Heart left ventricle (tissue), 16 donors: ENCODE measurements at regions of chr6 and their contacts with region 1.

Region 1: GRCh38 chr6:20401205-20402091 is at the start of gene E2F3:
- DNase-seq: peak; percentile 99 to 100 (median 100)
- ATAC-seq: peak; percentile 94 to 99 (median 96)
- H3K4me3 ChIP-seq: peak within 1 kb of the TSS; percentile 64 to 89 (median 78)
- H3K27ac ChIP-seq: peak within 1 kb of the TSS; percentile 64 to 95 (median 91)
- H3K4me1 ChIP-seq: peaks cover 0 to 37% (median 7%) of the 10 kb centered on the region in 12 donors
- H3K27me3 ChIP-seq: no peaks in the 10 kb centered on the region
- CTCF ChIP-seq: no peak
- POLR2A ChIP-seq: peak in 1 of 2 donors; percentile 34
- total RNA-seq, gene E2F3: 4.2 to 13.8 (median 6.8) TPM

Region 2: GRCh38 chr6:19804205-19805123 is 597.0 kb before region 1 on chr6:
- intact Hi-C with region 1: loop called in 2 of 10 experiments (anchors 10 kb)
- DNase-seq: peak; percentile 96 to 97 (median 97)
- ATAC-seq: peak; percentile 98 to 100 (median 99)
- H3K4me3 ChIP-seq: peak overlapping the region; percentile 12 to 67 (median 58)
- H3K27ac ChIP-seq: peak overlapping the region; percentile 82 to 99 (median 92)
- H3K4me1 ChIP-seq: peaks cover 0 to 28% (median 7%) of the 10 kb centered on the region in 12 donors
- H3K27me3 ChIP-seq: peaks cover 0 to 12% (median 0%) of the 10 kb centered on the region in 9 donors
- CTCF ChIP-seq: peak in 1 of 12 donors; percentile 9
- POLR2A ChIP-seq: peak; percentile 36 to 88

Region 3: GRCh38 chr6:20092071-20092566 is 309.3 kb before region 1 on chr6:
- intact Hi-C with region 1: loop called in 2 of 10 experiments (anchors 10 kb)
- DNase-seq: no peak
- ATAC-seq: no peak
- H3K4me3 ChIP-seq: no peak overlapping the region
- H3K27ac ChIP-seq: no peak overlapping the region
- H3K4me1 ChIP-seq: no peaks in the 10 kb centered on the region
- H3K27me3 ChIP-seq: no peaks in the 10 kb centered on the region
- CTCF ChIP-seq: peak; percentile 65 to 82 (median 71)
- POLR2A ChIP-seq: no peak

Region 4: DNA sequence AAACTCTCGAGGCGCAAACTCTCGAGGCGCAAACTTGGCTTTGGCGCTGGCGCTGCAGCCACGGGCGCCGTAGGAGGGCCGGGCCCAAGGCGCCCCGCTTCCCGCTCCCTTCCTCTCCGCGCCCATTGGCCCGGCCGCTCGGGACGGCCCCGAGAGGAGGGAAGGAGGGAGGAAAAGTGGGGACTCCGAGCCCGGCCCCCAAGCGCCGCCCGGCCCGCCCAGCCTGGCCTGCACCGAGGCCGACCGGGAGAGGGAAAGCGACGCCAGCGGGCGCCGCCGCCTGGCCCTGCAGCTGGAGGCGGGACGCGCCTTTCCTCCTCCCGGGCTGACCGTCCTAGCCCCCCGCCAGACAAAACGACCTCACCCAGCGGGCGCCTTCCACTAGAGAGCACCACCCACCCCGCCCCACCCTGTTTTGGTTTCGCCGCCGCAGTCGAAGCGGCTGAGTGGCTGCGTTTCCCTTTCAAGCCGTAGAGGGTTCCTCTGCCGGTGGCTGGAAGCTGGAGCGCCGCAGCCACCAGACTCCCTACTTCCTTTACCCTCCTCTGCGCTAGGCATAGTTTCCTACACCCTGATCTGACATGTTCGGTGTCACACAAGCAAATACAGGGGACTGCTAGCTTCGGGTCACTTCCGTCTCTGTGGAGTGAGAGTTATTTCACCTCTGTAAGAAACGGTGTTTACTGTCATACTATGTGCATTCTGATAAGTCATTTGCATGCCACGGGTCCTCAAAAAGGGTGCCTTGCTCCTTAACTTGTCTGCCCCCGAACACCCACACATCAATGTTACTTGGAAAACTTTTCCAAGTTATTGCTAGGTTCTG is 188.8 kb before region 1 on chr6 and contains the start of gene MBOAT1:
- intact Hi-C with region 1: loop called in 4 of 10 experiments (anchors 5 to 10 kb)
- DNase-seq: peak; percentile 93 to 97 (median 96)
- ATAC-seq: peak; percentile 97 to 99 (median 98)
- H3K4me3 ChIP-seq: peak within 1 kb of the TSS; percentile 42 to 97 (median 82)
- H3K27ac ChIP-seq: peak within 1 kb of the TSS; percentile 82 to 96 (median 89)
- H3K4me1 ChIP-seq: peaks cover 5 to 62% (median 23%) of the 10 kb centered on the region in 12 donors
- H3K27me3 ChIP-seq: no peaks in the 10 kb centered on the region
- CTCF ChIP-seq: peak in 5 of 12 donors; percentile 28 to 48 (median 31)
- POLR2A ChIP-seq: peak in 1 of 2 donors; percentile 79
- total RNA-seq, gene MBOAT1: 2.6 to 14.4 (median 4.3) TPM

Region 5: GRCh38 chr6:20291764-20292580 is 109.5 kb before region 1 on chr6:
- intact Hi-C with region 1: loop called in 4 of 10 experiments (anchors 5 to 10 kb)
- DNase-seq: peak in 4 of 5 donors; percentile 64 to 76 (median 69)
- ATAC-seq: peak in 3 of 4 donors; percentile 80 to 95 (median 92)
- H3K4me3 ChIP-seq: no peak overlapping the region
- H3K27ac ChIP-seq: no peak overlapping the region
- H3K4me1 ChIP-seq: peaks cover 0 to 4% (median 0%) of the 10 kb centered on the region in 12 donors
- H3K27me3 ChIP-seq: no peaks in the 10 kb centered on the region
- CTCF ChIP-seq: peak; percentile 84 to 97 (median 92)
- POLR2A ChIP-seq: no peak

Region 6: DNA sequence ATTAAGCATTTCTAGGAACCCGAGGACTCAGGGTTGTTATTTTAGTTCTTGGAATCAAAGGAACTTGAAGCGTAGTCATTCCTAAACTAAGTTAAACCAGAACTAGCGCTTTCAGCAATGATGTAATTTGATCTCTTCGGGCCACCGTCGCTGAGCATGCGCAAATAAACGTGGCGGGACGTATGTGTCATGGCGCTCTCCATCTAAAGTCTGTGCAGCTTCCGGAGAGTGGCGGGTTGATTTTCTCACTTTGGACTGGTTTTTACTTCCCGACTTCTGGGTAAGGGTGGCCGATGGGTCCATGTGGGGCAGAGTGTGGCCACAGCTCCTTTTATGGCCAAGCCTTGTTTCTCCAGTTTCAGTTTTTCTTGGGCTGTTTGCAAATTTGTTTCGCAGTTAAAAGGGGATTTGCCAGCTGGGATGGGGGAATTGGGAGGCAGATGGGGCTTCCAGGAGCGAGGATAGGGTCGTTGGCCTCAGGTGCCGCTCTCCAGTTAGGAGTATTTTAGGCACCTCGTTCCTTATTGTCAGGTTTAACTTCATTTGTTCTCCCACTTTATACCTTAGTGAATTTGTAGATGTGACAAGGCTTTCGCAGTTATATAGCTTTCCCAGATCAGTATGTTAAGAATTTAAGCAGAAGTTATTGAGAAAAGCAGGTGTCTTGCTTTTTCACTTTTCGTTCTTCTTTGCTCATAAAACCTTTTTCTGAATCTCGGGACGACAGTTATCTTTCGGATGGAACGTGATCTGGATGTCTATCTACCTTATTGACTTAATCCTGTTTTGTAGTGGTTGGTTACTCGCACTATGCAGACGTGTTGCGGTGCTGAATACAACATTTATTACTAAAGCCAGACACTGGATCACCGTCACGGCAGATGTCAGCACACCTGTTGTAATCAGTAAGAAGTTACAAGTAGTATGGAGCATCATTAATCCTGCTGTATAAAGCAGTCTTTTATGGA is 133.1 kb after region 1 on chr6 and contains the start of gene CDKAL1:
- intact Hi-C with region 1: loop called (anchors 2 to 5 kb)
- DNase-seq: peak; percentile 88 to 93 (median 92)
- ATAC-seq: peak; percentile 68 to 97 (median 96)
- H3K4me3 ChIP-seq: peak within 1 kb of the TSS; percentile 53 to 84 (median 73)
- H3K27ac ChIP-seq: peak within 1 kb of the TSS; percentile 55 to 90 (median 74)
- H3K4me1 ChIP-seq: peaks cover 0 to 16% (median 6%) of the 10 kb centered on the region in 12 donors
- H3K27me3 ChIP-seq: no peaks in the 10 kb centered on the region
- CTCF ChIP-seq: no peak
- POLR2A ChIP-seq: peak in 1 of 2 donors; percentile 30
- total RNA-seq, gene CDKAL1: 7.5 to 14.3 (median 9.9) TPM